CD14-positive monocyte (primary cell): ENCODE measurements at regions of chr15 and their contacts with region 1.

Region 1: DNA sequence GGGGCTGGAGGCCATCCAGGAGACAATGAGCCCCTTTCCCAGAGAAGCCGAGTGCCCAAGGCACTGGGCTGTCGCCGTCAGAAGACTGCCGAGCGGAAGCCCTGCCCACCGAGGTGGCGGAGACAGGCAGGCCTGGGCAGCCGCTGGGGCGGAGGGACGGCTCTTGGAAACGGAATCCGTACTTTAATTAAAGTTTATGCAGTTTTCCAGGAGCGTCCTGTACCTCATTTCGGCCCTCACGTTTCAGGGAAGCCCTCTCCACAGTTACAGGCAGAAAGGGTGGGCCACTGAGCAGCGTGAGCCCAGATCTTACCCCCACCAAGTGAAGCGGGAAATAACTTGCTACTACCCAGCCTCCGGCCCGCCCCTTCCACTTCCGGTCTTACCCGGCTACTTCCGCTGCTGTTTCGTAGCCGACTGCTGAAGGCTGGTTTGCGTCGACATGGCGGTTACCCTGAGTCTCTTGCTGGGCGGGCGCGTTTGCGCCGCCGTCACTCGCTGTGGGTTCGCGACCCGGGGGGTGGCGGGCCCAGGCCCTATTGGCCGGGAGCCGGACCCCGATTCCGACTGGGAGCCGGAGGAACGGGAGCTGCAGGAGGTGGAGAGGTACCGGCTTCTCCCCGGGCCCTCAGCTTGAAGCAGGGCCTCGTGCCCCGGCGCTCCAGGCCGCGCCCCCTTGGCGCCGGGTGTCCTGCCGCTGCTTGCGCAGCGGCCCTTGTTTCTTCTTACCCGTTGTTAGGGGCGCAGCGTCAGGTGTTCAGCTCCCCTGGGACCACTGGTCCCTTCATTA is at the start of gene NGRN:
- DNase-seq: peak; percentile 82 to 90 (median 86)
- H3K4me3 ChIP-seq: peak within 1 kb of the TSS; percentile 67 to 91 (median 80)
- H3K4me3 Mint-ChIP-seq: peak within 1 kb of the TSS; percentile 94 to 95
- H3K27ac ChIP-seq: peak within 1 kb of the TSS; percentile 91
- H3K27ac Mint-ChIP-seq: peak within 1 kb of the TSS; percentile 91 to 98 (median 97)
- H3K4me1 ChIP-seq: peaks cover 26 to 35% of the 10 kb centered on the region in 2 donors
- H3K4me1 Mint-ChIP-seq: peaks cover 41% of the 10 kb centered on the region
- H3K27me3 ChIP-seq: no peaks in the 10 kb centered on the region
- H3K27me3 Mint-ChIP-seq: peaks cover 1 to 3% (median 1%) of the 10 kb centered on the region in 3 donors
- CTCF ChIP-seq: no peak
- polyA plus RNA-seq, gene NGRN: 14.4 to 20.3 (median 18.9) TPM

Region 2: GRCh38 chr15:89642106-89642505 is 623.4 kb before region 1 on chr15:
- intact Hi-C with region 1: no loop called
- DNase-seq: no peak
- H3K4me3 ChIP-seq: no peak overlapping the region
- H3K4me3 Mint-ChIP-seq: no peak overlapping the region
- H3K27ac ChIP-seq: no peak overlapping the region
- H3K27ac Mint-ChIP-seq: no peak overlapping the region
- H3K4me1 ChIP-seq: no peaks in the 10 kb centered on the region
- H3K4me1 Mint-ChIP-seq: peaks cover under 1% of the 10 kb centered on the region
- H3K27me3 ChIP-seq: no peaks in the 10 kb centered on the region
- H3K27me3 Mint-ChIP-seq: peaks cover 0 to 3% (median 2%) of the 10 kb centered on the region in 3 donors
- CTCF ChIP-seq: no peak

Region 3: GRCh38 chr15:90165659-90166421 is 99.6 kb before region 1 on chr15:
- intact Hi-C with region 1: no loop called
- DNase-seq: peak; percentile 84 to 96 (median 85)
- H3K4me3 ChIP-seq: no peak overlapping the region
- H3K4me3 Mint-ChIP-seq: no peak overlapping the region
- H3K27ac ChIP-seq: peak overlapping the region in 1 of 2 donors; percentile 9
- H3K27ac Mint-ChIP-seq: peak overlapping the region; percentile 21 to 78 (median 57)
- H3K4me1 ChIP-seq: peaks cover 40 to 53% of the 10 kb centered on the region in 2 donors
- H3K4me1 Mint-ChIP-seq: peaks cover 46% of the 10 kb centered on the region
- H3K27me3 ChIP-seq: no peaks in the 10 kb centered on the region
- H3K27me3 Mint-ChIP-seq: peaks cover 0 to 2% (median 0%) of the 10 kb centered on the region in 3 donors
- CTCF ChIP-seq: no peak

Region 4: GRCh38 chr15:90191794-90192509 is 73.5 kb before region 1 on chr15:
- intact Hi-C with region 1: no loop called
- DNase-seq: peak; percentile 54 to 72 (median 68)
- H3K4me3 ChIP-seq: peak overlapping the region in 1 of 3 experiments; percentile 64
- H3K4me3 Mint-ChIP-seq: peak overlapping the region; percentile 63 to 83
- H3K27ac ChIP-seq: peak overlapping the region; percentile 35 to 70
- H3K27ac Mint-ChIP-seq: peak overlapping the region; percentile 75 to 92 (median 84)
- H3K4me1 ChIP-seq: peaks cover 71 to 81% of the 10 kb centered on the region in 2 donors
- H3K4me1 Mint-ChIP-seq: peaks cover 81% of the 10 kb centered on the region
- H3K27me3 ChIP-seq: no peaks in the 10 kb centered on the region
- H3K27me3 Mint-ChIP-seq: no peaks in the 10 kb centered on the region
- CTCF ChIP-seq: no peak

Region 5: DNA sequence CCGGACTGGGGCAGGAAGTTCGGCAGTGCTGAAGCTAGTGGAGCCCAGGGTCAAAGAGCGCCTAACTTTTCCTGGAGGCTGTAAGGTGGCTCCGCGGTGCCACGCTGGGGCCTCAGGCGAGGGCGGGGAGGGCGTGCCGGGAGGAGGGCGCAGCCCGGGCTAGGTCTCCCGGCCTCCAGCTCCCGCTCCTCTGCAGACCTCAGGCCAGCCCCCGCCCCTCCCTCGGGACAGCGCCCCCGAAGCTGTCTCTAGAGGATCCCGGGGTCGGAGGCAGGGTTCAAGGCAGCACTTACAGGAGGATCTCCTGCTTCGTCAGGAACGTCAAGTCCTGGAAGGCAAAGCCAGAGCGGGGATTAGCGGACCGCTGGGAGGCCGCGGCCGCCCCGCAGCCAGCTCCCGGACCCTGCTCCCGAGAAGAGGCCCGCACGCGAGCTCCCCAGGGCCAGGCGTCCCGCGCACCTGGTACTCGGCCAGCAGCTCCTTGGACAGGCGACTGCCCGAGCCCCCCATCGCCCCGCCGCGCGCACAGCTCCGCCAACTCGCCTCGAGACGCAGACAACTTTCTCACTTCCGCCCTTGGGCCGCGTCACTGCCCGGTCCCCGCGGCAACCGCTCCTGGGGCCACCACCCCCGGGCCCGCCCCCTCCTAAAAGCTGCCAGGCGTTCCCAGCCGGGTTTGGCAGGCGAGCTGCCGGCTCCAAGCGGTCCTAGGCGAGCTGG is 31.9 kb before region 1 on chr15 and contains the start of gene CIB1:
- intact Hi-C with region 1: loop called (anchors 2 to 5 kb)
- DNase-seq: peak; percentile 97 to 98 (median 98)
- H3K4me3 ChIP-seq: peak within 1 kb of the TSS; percentile 73 to 96 (median 91)
- H3K4me3 Mint-ChIP-seq: peak within 1 kb of the TSS; percentile 80 to 90
- H3K27ac ChIP-seq: peak within 1 kb of the TSS; percentile 78 to 95
- H3K27ac Mint-ChIP-seq: peak within 1 kb of the TSS; percentile 88 to 96 (median 93)
- H3K4me1 ChIP-seq: peaks cover 41 to 47% of the 10 kb centered on the region in 2 donors
- H3K4me1 Mint-ChIP-seq: peaks cover 40% of the 10 kb centered on the region
- H3K27me3 ChIP-seq: no peaks in the 10 kb centered on the region
- H3K27me3 Mint-ChIP-seq: peaks cover 0 to 1% (median 0%) of the 10 kb centered on the region in 3 donors
- CTCF ChIP-seq: peak; percentile 66
- polyA plus RNA-seq, gene CIB1: 77.5 to 197 (median 169) TPM

Region 6: GRCh38 chr15:90336705-90337141 is 71.3 kb after region 1 on chr15:
- intact Hi-C with region 1: no loop called
- DNase-seq: peak; percentile 85 to 94 (median 93)
- H3K4me3 ChIP-seq: peak overlapping the region in 1 of 3 experiments; percentile 29
- H3K4me3 Mint-ChIP-seq: peak overlapping the region in 1 of 2 donors; percentile 11
- H3K27ac ChIP-seq: peak overlapping the region; percentile 53 to 75
- H3K27ac Mint-ChIP-seq: peak overlapping the region; percentile 72 to 94 (median 88)
- H3K4me1 ChIP-seq: peaks cover 39 to 45% of the 10 kb centered on the region in 2 donors
- H3K4me1 Mint-ChIP-seq: peaks cover 33% of the 10 kb centered on the region
- H3K27me3 ChIP-seq: no peaks in the 10 kb centered on the region
- H3K27me3 Mint-ChIP-seq: peaks cover 0 to 2% (median 0%) of the 10 kb centered on the region in 3 donors
- CTCF ChIP-seq: no peak